Lower leg skin (tissue), 4 donors: ENCODE measurements at regions of chr4 and their contacts with region 1.

Region 1: DNA sequence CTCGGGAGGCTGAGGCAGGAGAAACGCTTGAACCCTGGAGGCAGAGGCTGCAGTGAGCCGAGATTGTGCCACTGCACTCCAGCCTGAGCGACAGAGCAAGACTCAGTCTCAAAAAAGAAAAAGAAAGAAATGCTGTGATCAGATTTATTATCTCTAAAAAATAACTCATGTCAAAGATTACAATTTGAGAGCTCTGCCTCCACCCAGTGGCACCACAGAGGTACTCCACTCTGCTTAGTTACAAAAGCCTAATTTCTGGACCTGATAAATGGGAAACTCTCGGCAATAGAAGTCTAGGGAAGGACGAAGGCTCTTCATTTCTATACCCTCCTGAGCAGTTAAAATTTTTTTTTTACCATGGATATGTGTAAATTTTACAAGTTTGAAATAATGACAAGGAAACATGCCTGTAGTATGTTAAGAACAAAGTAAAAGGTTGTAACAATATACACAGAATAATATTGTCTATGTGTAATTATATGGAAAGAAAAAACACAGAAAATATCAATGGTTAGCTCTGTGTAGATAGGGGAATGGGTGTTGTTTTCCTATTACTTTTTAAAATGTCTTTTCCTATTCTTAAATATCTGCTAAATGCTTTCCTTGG is 149.8 kb downstream of the STIM2 start:
- DNase-seq: peak in 1 of 2 donors; percentile 29
- H3K4me3 ChIP-seq: no peak overlapping the region
- CTCF ChIP-seq: peak in 1 of 3 donors; percentile 44
- POLR2A ChIP-seq: no peak

Region 2: GRCh38 chr4:26459054-26459755 is 551.2 kb before region 1 on chr4:
- intact Hi-C with region 1: loop called (anchors 10 kb)
- DNase-seq: no peak
- H3K4me3 ChIP-seq: no peak overlapping the region
- CTCF ChIP-seq: no peak
- POLR2A ChIP-seq: no peak